Ovary (tissue), 10 donors: ENCODE measurements at regions of chr9 and their contacts with region 1.

Region 1: GRCh38 chr9:75213765-75214164 is 125.5 kb downstream of the OSTF1 start:
- DNase-seq: no peak
- H3K4me3 ChIP-seq: no peak overlapping the region
- H3K27ac ChIP-seq: no peak overlapping the region
- H3K4me1 ChIP-seq: no peaks in the 10 kb centered on the region
- H3K27me3 ChIP-seq: no peaks in the 10 kb centered on the region
- CTCF ChIP-seq: no peak
- EP300 ChIP-seq: no peak
- POLR2A ChIP-seq: no peak

Region 2: DNA sequence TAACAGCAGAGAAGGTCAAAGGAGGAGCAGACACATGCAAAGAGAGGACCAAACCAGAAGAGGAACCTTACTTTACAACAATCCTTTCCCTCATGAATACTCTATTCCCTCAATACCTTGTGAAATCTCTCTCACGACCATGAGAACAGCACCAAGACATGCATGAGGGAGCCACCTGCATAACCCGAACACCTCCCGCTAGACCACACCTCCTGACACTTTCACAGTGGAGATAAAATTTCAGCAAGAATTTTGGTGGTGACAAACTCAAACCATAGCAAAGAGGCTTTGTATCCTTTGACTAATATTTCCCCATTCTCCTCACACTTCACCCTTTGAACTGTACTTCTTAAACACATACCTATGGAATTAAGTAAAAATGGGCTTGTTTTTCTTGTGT is 614.9 kb before region 1 on chr9:
- intact Hi-C with region 1: no loop called
- DNase-seq: no peak
- H3K4me3 ChIP-seq: no peak overlapping the region
- H3K27ac ChIP-seq: no peak overlapping the region
- H3K4me1 ChIP-seq: no peaks in the 10 kb centered on the region
- H3K27me3 ChIP-seq: no peaks in the 10 kb centered on the region
- CTCF ChIP-seq: no peak
- EP300 ChIP-seq: no peak
- POLR2A ChIP-seq: no peak

Region 3: GRCh38 chr9:75541734-75542133 is 328.0 kb after region 1 on chr9:
- intact Hi-C with region 1: loop called in 1 of 4 experiments (anchors 5 kb)
- DNase-seq: no peak
- H3K4me3 ChIP-seq: no peak overlapping the region
- H3K27ac ChIP-seq: no peak overlapping the region
- H3K4me1 ChIP-seq: no peaks in the 10 kb centered on the region
- H3K27me3 ChIP-seq: no peaks in the 10 kb centered on the region
- CTCF ChIP-seq: no peak
- EP300 ChIP-seq: no peak
- POLR2A ChIP-seq: no peak